Esophagus muscularis mucosa (tissue), 4 donors: ENCODE measurements at regions of chr17 and their contacts with region 1.

Region 1: DNA sequence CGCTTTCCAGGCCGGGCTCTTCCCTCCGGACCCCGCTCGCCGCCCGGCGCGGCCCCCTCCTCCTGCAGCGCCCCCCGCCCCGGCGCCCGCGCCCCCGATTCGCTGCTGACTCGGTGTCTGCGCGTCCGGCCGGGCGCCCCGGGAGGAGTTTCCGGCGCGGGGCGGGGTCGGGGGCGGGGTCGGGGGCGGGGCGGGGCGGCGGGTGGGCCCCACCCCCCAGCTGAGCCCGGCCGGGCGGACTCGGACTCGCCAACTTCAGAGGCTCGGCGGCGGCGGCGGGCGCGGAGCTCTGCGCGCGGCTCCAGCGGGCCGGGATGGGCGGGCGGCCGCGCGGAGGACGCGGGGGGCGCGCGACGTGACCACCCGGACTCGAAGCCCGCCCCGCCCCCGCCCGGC is at the start of gene METRNL:
- DNase-seq: no peak
- H3K4me3 ChIP-seq: peak within 1 kb of the TSS; percentile 77 to 93 (median 87)
- H3K27ac ChIP-seq: peak within 1 kb of the TSS; percentile 87 to 94 (median 92)
- H3K4me1 ChIP-seq: peaks cover 40 to 55% (median 51%) of the 10 kb centered on the region in 4 donors
- H3K27me3 ChIP-seq: peaks cover 0 to 7% (median 0%) of the 10 kb centered on the region in 4 donors
- CTCF ChIP-seq: no peak
- EP300 ChIP-seq: no peak
- POLR2A ChIP-seq: no peak
- total RNA-seq, gene METRNL: 36.5 to 124 (median 61.5) TPM

Region 2: DNA sequence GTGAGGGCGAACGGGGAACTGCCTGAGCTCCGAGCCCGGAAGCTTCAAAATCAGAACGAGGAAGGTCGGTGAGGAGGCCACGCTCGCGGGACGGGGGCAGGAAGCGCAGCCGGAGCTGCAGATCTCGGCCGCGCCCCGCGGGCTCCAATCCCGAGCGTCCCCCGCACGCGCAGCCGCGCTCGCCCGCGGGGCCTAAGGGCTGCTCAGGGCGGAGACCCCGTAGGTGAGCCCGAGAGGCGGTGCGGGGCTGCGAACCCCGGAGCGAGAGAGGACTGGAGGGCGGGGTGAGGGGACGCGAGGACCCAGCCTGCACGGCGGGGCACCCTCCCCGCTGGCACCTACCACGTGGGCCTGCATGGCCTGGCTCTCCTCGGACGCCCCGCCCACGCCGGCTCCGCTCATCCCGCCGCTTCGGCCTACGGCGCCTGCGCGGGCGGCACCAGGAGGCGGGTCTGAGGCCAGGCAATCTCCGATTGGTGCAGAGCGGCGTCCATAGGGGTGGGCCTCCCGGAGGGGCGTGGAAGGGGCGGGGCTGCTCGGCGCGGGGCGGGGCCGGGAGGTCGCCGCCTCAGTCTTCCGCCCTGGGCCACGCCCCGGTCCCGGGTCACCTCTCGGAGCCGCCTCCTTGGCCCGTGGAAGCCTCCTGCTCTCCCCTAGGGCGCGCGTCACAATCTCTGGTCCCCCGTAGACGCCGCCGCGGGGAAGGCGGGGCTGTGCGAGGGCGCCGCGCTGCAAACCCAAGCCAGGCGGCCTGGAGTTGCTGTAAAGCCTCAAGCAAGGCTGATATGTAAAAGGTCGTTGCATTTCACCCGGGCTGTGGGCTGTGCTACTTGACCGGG is 27.7 kb before region 1 on chr17:
- intact Hi-C with region 1: loop called (anchors 2 kb)
- DNase-seq: peak; percentile 99
- H3K4me3 ChIP-seq: peak overlapping the region; percentile 76 to 89 (median 84)
- H3K27ac ChIP-seq: peak overlapping the region; percentile 85 to 87 (median 86)
- H3K4me1 ChIP-seq: peaks cover 28 to 42% (median 31%) of the 10 kb centered on the region in 4 donors
- H3K27me3 ChIP-seq: no peaks in the 10 kb centered on the region
- CTCF ChIP-seq: no peak
- EP300 ChIP-seq: no peak
- POLR2A ChIP-seq: peak; percentile 78